Caco-2 (cell line): ENCODE measurements at regions of chr5 and their contacts with region 1.

Region 1: GRCh38 chr5:173823711-173824528 is 64.2 kb upstream of the CPEB4 start:
- DNase-seq: peak; percentile 91
- H3K4me3 ChIP-seq: no peak overlapping the region
- H3K4me3 Mint-ChIP-seq: peak overlapping the region; percentile 61
- H3K27ac Mint-ChIP-seq: peak overlapping the region; percentile 95
- H3K4me1 ChIP-seq: peaks cover 52% of the 10 kb centered on the region
- H3K4me1 Mint-ChIP-seq: peaks cover 49% of the 10 kb centered on the region
- H3K27me3 ChIP-seq: no peaks in the 10 kb centered on the region
- H3K27me3 Mint-ChIP-seq: no peaks in the 10 kb centered on the region
- CTCF ChIP-seq: no peak

Region 2: GRCh38 chr5:173001229-173001841 is 822.6 kb before region 1 on chr5:
- CTCF ChIA-PET with region 1: no interaction called
- POLR2A ChIA-PET with region 1: no interaction called
- intact Hi-C with region 1: no loop called
- DNase-seq: no peak
- H3K4me3 ChIP-seq: no peak overlapping the region
- H3K4me3 Mint-ChIP-seq: no peak overlapping the region
- H3K27ac Mint-ChIP-seq: no peak overlapping the region
- H3K4me1 ChIP-seq: no peaks in the 10 kb centered on the region
- H3K4me1 Mint-ChIP-seq: peaks cover 10% of the 10 kb centered on the region
- H3K27me3 ChIP-seq: no peaks in the 10 kb centered on the region
- H3K27me3 Mint-ChIP-seq: no peaks in the 10 kb centered on the region
- CTCF ChIP-seq: no peak

Region 3: DNA sequence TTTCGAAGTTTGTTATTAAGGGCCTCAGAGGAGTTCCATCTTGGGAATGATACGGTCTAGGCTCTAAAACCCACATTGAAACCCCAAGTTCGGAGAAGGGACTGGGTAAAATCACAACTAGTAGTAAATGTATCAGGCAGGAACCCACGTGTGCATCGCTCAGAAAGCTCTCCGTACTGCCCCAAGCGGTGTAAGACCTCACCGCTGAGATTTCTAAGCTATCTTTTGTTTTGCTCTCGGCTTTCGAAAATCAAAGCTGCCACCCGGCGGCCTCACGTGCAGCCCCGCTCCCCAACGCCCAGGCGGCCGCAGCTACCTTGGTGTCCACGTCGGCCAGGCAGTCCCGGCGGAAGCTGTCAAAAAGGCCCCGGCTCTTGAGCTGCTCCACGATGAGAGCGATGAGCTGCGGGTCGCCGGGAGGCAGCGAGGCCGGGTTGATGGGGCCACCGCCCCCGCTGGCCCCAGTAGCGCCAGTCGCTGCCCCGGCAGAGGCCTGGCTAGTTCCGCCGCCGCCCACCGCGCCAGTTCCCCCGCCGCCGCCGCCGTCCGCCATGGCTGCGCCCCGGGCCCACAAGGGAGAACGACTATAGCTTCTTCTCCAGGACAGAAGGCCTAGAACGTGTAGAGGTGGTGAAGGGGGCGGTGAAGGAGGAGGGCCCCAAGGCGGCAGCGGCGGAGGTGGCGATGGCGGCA is 207.9 kb before region 1 on chr5:
- CTCF ChIA-PET with region 1: no interaction called
- POLR2A ChIA-PET with region 1: no interaction called
- intact Hi-C with region 1: loop called (anchors 2 kb)
- DNase-seq: peak; percentile 75 to 84
- H3K4me3 ChIP-seq: peak overlapping the region; percentile 90
- H3K4me3 Mint-ChIP-seq: peak overlapping the region; percentile 89
- H3K27ac Mint-ChIP-seq: peak overlapping the region; percentile 94
- H3K4me1 ChIP-seq: peaks cover 20% of the 10 kb centered on the region
- H3K4me1 Mint-ChIP-seq: peaks cover 23% of the 10 kb centered on the region
- H3K27me3 ChIP-seq: no peaks in the 10 kb centered on the region
- H3K27me3 Mint-ChIP-seq: no peaks in the 10 kb centered on the region
- CTCF ChIP-seq: peak; percentile 61 to 64

Region 4: DNA sequence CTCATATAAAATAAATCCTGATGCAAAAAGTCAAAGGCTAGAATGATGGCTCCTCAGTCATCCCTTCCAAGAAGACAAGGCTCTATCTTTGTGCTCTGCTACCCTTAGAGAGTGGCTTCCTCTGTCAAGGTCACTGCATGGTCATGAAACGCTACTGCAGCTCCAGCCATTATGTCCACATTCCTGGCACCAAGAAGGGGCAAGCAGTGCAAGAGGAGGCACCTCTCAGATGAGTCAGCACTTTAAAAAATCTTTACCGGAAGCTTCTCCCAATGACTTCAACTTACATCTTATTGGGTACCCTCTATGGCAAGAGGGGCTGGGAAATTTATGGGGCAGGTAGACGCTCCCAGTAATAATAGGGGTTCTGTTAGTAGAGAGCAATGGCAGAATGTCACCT is 65.2 kb before region 1 on chr5:
- CTCF ChIA-PET with region 1: no interaction called
- POLR2A ChIA-PET with region 1: no interaction called
- intact Hi-C with region 1: no loop called
- DNase-seq: no peak
- H3K4me3 ChIP-seq: no peak overlapping the region
- H3K4me3 Mint-ChIP-seq: no peak overlapping the region
- H3K27ac Mint-ChIP-seq: no peak overlapping the region
- H3K4me1 ChIP-seq: peaks cover 13% of the 10 kb centered on the region
- H3K4me1 Mint-ChIP-seq: peaks cover 9% of the 10 kb centered on the region
- H3K27me3 ChIP-seq: no peaks in the 10 kb centered on the region
- H3K27me3 Mint-ChIP-seq: no peaks in the 10 kb centered on the region
- CTCF ChIP-seq: no peak

Region 5: DNA sequence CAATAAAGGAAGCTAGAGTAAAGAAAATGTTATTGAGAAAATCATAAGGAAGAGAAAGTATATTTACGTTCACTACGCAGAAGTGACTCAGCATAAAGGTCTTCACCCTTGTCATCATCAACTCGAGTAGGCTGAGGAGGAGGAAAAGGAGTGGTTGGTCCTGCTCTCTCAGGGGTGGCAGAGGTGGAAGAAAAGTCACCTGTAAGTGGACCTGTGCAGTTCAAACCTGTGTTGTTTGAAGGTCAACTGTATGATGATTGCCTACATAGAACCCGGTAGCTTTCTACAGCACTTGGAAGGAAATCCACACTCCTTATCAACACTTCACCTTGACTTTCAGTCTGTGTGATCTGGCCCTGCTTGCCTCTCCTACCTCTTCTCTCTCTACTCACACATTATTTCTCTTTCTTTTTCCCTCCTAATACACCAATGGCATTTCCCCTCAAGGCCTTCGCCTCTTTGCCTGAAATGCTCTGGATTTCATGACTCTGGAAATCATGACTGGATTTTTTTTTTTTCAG is 45.1 kb before region 1 on chr5:
- CTCF ChIA-PET with region 1: no interaction called
- POLR2A ChIA-PET with region 1: no interaction called
- intact Hi-C with region 1: no loop called
- DNase-seq: no peak
- H3K4me3 ChIP-seq: no peak overlapping the region
- H3K4me3 Mint-ChIP-seq: no peak overlapping the region
- H3K27ac Mint-ChIP-seq: no peak overlapping the region
- H3K4me1 ChIP-seq: peaks cover 20% of the 10 kb centered on the region
- H3K4me1 Mint-ChIP-seq: peaks cover 28% of the 10 kb centered on the region
- H3K27me3 ChIP-seq: no peaks in the 10 kb centered on the region
- H3K27me3 Mint-ChIP-seq: no peaks in the 10 kb centered on the region
- CTCF ChIP-seq: no peak

Region 6: DNA sequence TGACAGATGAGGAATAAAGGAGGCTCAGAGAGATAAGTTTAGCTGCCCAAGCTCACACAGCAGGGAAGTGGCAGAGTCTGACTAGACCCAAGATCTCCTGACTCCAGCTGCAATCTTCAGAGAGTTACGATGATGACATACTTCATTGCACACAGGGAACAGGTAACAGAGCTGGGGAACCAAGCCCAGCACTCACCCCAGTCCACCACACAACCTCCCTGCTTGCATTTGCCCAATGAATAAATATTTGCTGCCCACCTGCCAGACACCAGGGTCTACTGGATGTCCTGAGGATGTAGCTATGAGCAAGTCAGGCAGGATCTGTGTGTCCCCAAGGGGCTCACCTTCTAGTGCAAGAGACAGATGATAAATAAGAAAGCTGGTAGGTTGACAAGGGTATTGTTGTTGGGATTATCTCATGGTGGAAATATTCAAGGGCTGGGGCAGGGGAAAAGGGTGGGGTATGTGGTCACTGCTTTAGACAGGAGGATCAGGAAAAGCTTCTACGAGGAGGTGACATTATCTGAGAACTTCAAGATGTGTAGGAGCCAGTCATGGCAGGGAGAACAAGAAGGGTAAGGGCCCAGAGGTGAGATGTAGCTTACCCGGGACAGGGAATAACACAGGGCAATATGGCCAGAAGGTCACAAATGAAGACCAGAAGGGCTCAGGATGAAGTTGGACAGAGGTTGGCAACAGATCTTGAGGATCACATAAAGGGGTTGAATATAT is 35.7 kb after region 1 on chr5:
- CTCF ChIA-PET with region 1: no interaction called
- POLR2A ChIA-PET with region 1: no interaction called
- intact Hi-C with region 1: loop called (anchors 5 kb)
- DNase-seq: no peak
- H3K4me3 ChIP-seq: no peak overlapping the region
- H3K4me3 Mint-ChIP-seq: peak overlapping the region; percentile 6
- H3K27ac Mint-ChIP-seq: peak overlapping the region; percentile 17
- H3K4me1 ChIP-seq: peaks cover 67% of the 10 kb centered on the region
- H3K4me1 Mint-ChIP-seq: peaks cover 38% of the 10 kb centered on the region
- H3K27me3 ChIP-seq: no peaks in the 10 kb centered on the region
- H3K27me3 Mint-ChIP-seq: no peaks in the 10 kb centered on the region
- CTCF ChIP-seq: no peak

Region 7: GRCh38 chr5:173887610-173888472 is 63.9 kb after region 1 on chr5 and contains the start of gene CPEB4:
- CTCF ChIA-PET with region 1: interaction called, 4 read pairs
- POLR2A ChIA-PET with region 1: interaction called, 9 read pairs
- intact Hi-C with region 1: loop called (anchors 1 kb)
- DNase-seq: peak; percentile 98 to 99
- H3K4me3 ChIP-seq: peak within 1 kb of the TSS; percentile 66
- H3K4me3 Mint-ChIP-seq: peak within 1 kb of the TSS; percentile 78
- H3K27ac Mint-ChIP-seq: peak within 1 kb of the TSS; percentile 98
- H3K4me1 ChIP-seq: peaks cover 37% of the 10 kb centered on the region
- H3K4me1 Mint-ChIP-seq: peaks cover 41% of the 10 kb centered on the region
- H3K27me3 ChIP-seq: no peaks in the 10 kb centered on the region
- H3K27me3 Mint-ChIP-seq: no peaks in the 10 kb centered on the region
- CTCF ChIP-seq: no peak
- total RNA-seq, gene CPEB4: 21.4 and 25.1 TPM in 2 replicates

Region 8: GRCh38 chr5:173972925-173973615 is 149.2 kb after region 1 on chr5:
- CTCF ChIA-PET with region 1: no interaction called
- POLR2A ChIA-PET with region 1: interaction called, 3 read pairs
- intact Hi-C with region 1: loop called (anchors 1 kb)
- DNase-seq: peak; percentile 87 to 89
- H3K4me3 ChIP-seq: peak overlapping the region; percentile 42
- H3K4me3 Mint-ChIP-seq: peak overlapping the region; percentile 74
- H3K27ac Mint-ChIP-seq: peak overlapping the region; percentile 80
- H3K4me1 ChIP-seq: peaks cover 56% of the 10 kb centered on the region
- H3K4me1 Mint-ChIP-seq: peaks cover 28% of the 10 kb centered on the region
- H3K27me3 ChIP-seq: no peaks in the 10 kb centered on the region
- H3K27me3 Mint-ChIP-seq: no peaks in the 10 kb centered on the region
- CTCF ChIP-seq: peak; percentile 88 to 89